ENCODE measurements at regions of chr1 and their contacts with region 1.

Region 1: DNA sequence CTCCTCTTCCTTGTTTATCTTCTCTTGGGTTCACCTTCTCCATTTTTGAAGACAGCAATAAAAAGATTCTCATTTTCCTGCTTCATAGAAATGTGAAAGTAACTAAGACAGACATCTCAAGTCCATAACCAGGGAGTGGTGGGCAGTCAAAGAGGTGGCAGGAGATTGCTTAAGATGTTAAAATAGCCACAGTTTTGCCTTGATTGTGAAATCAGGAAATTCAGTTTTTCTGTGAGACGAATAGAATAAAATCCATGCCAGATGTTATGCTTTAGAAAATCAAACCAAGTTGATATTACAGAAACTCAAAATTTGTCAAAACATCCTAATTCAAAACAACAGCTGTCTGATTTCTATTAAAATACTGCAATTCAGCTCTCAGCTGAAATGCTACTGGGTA is 57.2 kb downstream of the TNN start:
- DNase-seq: no peak
- ATAC-seq: peak; percentile 52

Region 2: DNA sequence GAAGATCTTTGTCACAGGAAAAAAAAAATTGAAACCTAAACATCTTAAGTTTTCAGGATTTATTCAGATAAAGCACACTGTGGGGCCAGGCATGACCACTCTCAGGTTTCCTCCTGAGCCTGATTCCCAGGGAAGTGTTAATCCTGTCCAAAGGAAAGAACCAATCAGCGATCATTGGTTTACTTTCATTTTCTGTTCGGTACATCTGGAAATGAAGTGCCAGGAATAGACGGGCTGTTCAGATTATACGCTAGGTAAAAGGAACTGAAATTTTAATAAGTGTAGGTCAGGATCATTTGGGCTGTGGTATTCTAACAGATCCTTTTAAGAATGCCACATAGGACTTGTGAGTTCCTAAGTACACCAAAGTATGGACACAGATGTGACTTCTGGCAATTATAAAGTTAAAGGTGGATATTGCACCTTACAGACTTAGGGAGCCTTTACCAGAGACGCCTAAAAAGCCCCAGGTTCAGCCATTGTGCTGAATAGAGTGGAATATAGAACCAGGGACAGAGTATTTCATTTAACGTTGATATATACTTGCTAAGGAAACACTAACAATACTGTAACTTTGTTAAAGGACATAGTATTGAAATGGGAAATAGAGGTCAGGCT is 134.4 kb before region 1 on chr1:
- intact Hi-C with region 1: no loop called
- DNase-seq: no peak
- ATAC-seq: peak; percentile 81

Region 3: GRCh38 chr1:175023043-175023921 is 101.6 kb before region 1 on chr1 and contains the start of gene MRPS14:
- intact Hi-C with region 1: loop called (anchors 2 kb)
- DNase-seq: peak; percentile 97
- ATAC-seq: peak; percentile 99
- total RNA-seq, gene MRPS14: 29.5 TPM

Region 4: GRCh38 chr1:175413367-175413766 is 288.5 kb after region 1 on chr1:
- intact Hi-C with region 1: no loop called
- DNase-seq: no peak
- ATAC-seq: no peak

Measured in left ventricle myocardium superior (tissue), 1 donor.